Activated T-helper 1 cell treated with anti-CD3 and anti-CD28 coated beads, Interleukin-12 subunit alpha, Interleukin-12 subunit beta, Interleukin-2, Interleukin-4 antibody, amounts not matched to agents 30 ng/mL and 10 ng/mL and 1 ng/mL, durations not matched to agents 14 hours and 24 hours and 36 hours (primary cell): ENCODE measurements at regions of chr22 and their contacts with region 1.

Region 1: GRCh38 chr22:40950962-40951794 is at the start of gene RBX1:
- DNase-seq: peak; percentile 98
- H3K4me3 Mint-ChIP-seq: peak within 1 kb of the TSS; percentile 98
- H3K27ac Mint-ChIP-seq: peak within 1 kb of the TSS; percentile 98
- H3K4me1 Mint-ChIP-seq: peaks cover 33% of the 10 kb centered on the region
- H3K27me3 Mint-ChIP-seq: no peaks in the 10 kb centered on the region
- total RNA-seq, gene RBX1: 90.9 and 94.4 TPM in 2 replicates

Region 2: DNA sequence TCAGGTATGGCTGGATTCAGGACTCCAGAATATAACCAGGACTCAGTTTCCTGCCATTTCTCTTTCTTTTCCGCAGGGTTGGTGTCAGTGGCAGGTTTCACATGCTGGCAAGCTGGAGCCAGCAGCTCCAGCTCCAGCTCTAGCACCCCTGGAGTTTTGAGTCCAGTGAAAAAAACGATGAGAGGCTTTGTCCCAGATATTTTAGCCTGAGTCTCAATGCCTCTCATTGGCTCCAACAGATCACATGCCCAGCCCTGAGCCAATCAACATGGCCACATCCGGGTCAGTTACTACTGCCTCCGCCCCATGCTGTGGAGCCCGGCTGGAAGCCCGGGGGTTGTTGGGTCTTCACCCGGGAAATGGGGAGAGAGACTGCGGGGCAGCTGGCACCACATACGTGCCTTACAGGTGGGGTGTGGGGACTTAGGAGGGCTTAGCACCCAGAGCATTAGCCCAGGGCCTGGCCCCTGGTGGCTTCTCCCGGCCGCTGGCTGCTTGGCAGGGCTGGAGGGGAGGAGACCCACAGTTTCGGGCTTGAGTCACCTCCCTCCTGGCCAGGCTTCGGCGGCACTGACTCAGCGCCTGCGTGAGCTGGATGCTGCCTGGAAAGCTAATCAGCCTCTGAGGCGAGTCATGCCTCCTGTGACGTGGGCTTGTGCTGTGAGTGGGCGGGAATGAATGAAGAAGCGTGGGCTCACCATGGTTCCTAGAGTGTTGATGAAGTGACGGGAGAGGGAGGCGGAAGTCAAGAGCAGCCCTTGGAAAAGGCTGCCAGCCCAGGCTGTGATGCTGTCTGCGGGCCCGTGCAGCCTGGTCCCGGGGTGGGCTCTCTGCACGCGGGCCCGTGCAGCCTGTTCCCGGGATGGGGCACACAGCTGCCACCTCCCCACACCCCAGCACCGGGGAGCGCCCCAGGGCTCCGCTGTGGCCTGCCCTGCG is 299.3 kb before region 1 on chr22:
- intact Hi-C with region 1: loop called (anchors 1 kb)
- DNase-seq: peak; percentile 71
- H3K4me3 Mint-ChIP-seq: peak overlapping the region; percentile 72
- H3K27ac Mint-ChIP-seq: peak overlapping the region; percentile 91
- H3K4me1 Mint-ChIP-seq: peaks cover 32% of the 10 kb centered on the region
- H3K27me3 Mint-ChIP-seq: no peaks in the 10 kb centered on the region

Region 3: DNA sequence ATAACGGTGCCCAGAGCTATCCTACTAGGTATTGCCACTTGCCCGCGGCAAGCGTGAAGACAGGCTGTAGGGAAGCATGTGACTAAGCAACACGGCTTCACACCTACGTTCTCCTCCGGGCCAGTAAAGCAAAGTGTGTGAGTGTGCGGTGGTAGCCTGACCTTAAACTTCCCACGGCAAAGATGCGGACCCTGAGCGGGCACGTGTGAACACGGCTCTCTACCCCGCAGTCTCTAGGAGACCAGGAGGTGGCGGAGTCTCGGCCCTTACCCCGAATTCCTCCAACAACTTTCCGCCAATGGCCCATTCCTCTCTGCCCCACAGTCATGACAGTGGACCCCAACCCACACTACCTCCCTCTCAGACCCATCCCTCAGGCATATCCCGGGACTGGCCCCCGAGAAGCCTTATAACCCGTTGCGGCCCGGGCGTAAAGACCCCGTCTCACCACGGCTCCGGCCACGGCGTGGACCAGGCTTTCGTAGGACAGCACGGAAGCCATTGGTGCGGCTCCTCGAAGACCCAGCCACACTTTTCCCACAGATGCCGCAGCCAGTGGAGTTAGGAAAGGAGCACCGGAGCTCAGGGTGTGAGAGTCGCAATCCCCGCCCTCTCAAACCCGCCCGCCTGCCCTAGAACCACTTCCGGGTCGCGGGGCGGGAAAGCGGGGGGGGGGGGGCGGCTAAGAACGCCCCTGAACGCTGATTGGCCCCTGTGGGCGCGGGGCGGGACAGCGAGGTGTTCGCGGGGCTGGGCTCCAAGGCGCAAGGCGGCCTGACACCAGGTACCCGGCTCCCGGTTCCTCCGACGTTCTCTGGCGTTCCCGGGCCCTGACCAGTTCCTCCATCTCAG is 132.2 kb before region 1 on chr22 and contains the start of gene SLC25A17:
- intact Hi-C with region 1: loop called (anchors 2 kb)
- DNase-seq: peak; percentile 82
- H3K4me3 Mint-ChIP-seq: peak within 1 kb of the TSS; percentile 87
- H3K27ac Mint-ChIP-seq: peak within 1 kb of the TSS; percentile 93
- H3K4me1 Mint-ChIP-seq: peaks cover 33% of the 10 kb centered on the region
- H3K27me3 Mint-ChIP-seq: no peaks in the 10 kb centered on the region
- total RNA-seq, gene SLC25A17: 29.4 and 34.0 TPM in 2 replicates

Region 4: DNA sequence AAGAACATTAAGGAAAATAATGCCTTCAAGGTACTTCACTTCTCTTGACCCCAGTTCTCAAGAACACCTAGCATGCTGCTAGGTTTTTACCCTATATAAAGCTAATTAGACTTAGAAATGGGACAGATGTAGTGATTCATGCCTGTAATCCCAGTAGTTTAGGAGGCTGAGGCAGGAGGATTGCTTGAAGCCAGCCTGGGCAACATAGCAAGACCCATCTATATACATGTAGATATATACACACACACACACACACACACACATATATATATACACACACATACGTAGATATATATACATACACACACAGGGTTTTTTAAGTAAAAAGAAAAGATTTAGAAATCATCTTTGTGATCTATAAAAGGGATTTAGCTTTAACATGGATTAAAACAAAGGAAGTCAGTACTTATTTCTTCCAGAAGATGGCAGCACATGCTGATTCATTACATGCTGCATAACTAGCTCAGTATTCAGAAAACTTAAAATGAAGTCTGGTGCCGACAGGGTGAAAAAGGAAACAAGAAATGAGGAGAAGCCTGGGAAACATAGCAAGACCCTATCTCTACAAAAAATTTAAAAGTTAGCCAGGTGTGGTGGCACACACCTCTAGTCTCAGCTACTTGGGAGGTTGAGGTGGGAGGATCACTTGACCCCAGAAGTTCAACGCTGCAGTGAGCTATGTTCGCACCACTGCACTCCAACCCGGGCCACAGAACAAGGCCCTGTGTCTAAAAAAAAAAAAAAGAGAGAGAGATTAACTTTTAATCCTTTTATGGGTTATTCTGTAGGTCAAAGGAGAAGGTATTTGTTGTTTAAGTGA is 28.5 kb before region 1 on chr22:
- intact Hi-C with region 1: loop called (anchors 1 kb)
- DNase-seq: peak; percentile 8
- H3K4me3 Mint-ChIP-seq: peak overlapping the region; percentile 4
- H3K27ac Mint-ChIP-seq: peak overlapping the region; percentile 5
- H3K4me1 Mint-ChIP-seq: peaks cover 8% of the 10 kb centered on the region
- H3K27me3 Mint-ChIP-seq: no peaks in the 10 kb centered on the region

Region 5: GRCh38 chr22:41022470-41023298 is 71.5 kb after region 1 on chr22:
- intact Hi-C with region 1: loop called (anchors 1 kb)
- DNase-seq: peak; percentile 68
- H3K4me3 Mint-ChIP-seq: peak overlapping the region; percentile 82
- H3K27ac Mint-ChIP-seq: peak overlapping the region; percentile 1
- H3K4me1 Mint-ChIP-seq: peaks cover 7% of the 10 kb centered on the region
- H3K27me3 Mint-ChIP-seq: peaks cover 8% of the 10 kb centered on the region

Region 6: GRCh38 chr22:41204992-41205900 is 254.1 kb after region 1 on chr22 and contains the start of gene L3MBTL2:
- intact Hi-C with region 1: loop called (anchors 1 kb)
- DNase-seq: peak; percentile 98
- H3K4me3 Mint-ChIP-seq: peak within 1 kb of the TSS; percentile 97
- H3K27ac Mint-ChIP-seq: peak within 1 kb of the TSS; percentile 94
- H3K4me1 Mint-ChIP-seq: peaks cover 21% of the 10 kb centered on the region
- H3K27me3 Mint-ChIP-seq: peaks cover 12% of the 10 kb centered on the region
- total RNA-seq, gene L3MBTL2: 51.9 and 56.6 TPM in 2 replicates

Region 7: GRCh38 chr22:41468381-41469217 is 517.4 kb after region 1 on chr22 and contains the starts of genes ACO2 and PHF5A:
- intact Hi-C with region 1: loop called (anchors 1 kb)
- DNase-seq: peak; percentile 98
- H3K4me3 Mint-ChIP-seq: peak within 1 kb of the TSS; percentile 87
- H3K27ac Mint-ChIP-seq: peak within 1 kb of the TSS; percentile 99
- H3K4me1 Mint-ChIP-seq: peaks cover 22% of the 10 kb centered on the region
- H3K27me3 Mint-ChIP-seq: no peaks in the 10 kb centered on the region
- total RNA-seq, gene ACO2: 99.1 and 101 TPM in 2 replicates
- total RNA-seq, gene PHF5A: 83.7 and 96.8 TPM in 2 replicates